ENCODE measurements at regions of chr3 and their contacts with region 1.

Region 1: GRCh38 chr3:105691633-105692032 is 177.2 kb downstream of the CBLB start:
- DNase-seq: no peak
- H3K4me3 ChIP-seq: no peak overlapping the region
- CTCF ChIP-seq: no peak
- POLR2A ChIP-seq: no peak

Region 2: GRCh38 chr3:105801397-105801796 is 109.8 kb after region 1 on chr3:
- intact Hi-C with region 1: loop called (anchors 5 kb)
- DNase-seq: no peak
- H3K4me3 ChIP-seq: no peak overlapping the region
- CTCF ChIP-seq: no peak
- POLR2A ChIP-seq: no peak

Region 3: GRCh38 chr3:106609666-106610301 is 918.2 kb after region 1 on chr3:
- intact Hi-C with region 1: loop called (anchors 5 kb)
- DNase-seq: peak in 1 of 2 donors; percentile 76
- H3K4me3 ChIP-seq: no peak overlapping the region
- CTCF ChIP-seq: peak in 1 of 3 donors; percentile 52
- POLR2A ChIP-seq: no peak

Measured in lower leg skin (tissue), 4 donors.